Psoas muscle (tissue), 8 donors: ENCODE measurements at regions of chr4 and their contacts with region 1.

Region 1: GRCh38 chr4:22515145-22515887 is 550 bp downstream of the ADGRA3 start:
- DNase-seq: peak; percentile 65 to 78
- ATAC-seq: peak; percentile 61 to 73 (median 66)
- H3K4me3 ChIP-seq: peak overlapping the region; percentile 83
- H3K27ac ChIP-seq: peak overlapping the region; percentile 96
- H3K4me1 ChIP-seq: peaks cover 40% of the 10 kb centered on the region
- H3K27me3 ChIP-seq: no peaks in the 10 kb centered on the region
- CTCF ChIP-seq: peak; percentile 3

Region 2: GRCh38 chr4:22458098-22458497 is 57.2 kb before region 1 on chr4:
- intact Hi-C with region 1: loop called (anchors 5 kb)
- DNase-seq: peak; percentile 19 to 70
- ATAC-seq: peak; percentile 98
- H3K4me3 ChIP-seq: no peak overlapping the region
- H3K27ac ChIP-seq: peak overlapping the region; percentile 86
- H3K4me1 ChIP-seq: peaks cover 37% of the 10 kb centered on the region
- H3K27me3 ChIP-seq: no peaks in the 10 kb centered on the region
- CTCF ChIP-seq: no peak

Region 3: DNA sequence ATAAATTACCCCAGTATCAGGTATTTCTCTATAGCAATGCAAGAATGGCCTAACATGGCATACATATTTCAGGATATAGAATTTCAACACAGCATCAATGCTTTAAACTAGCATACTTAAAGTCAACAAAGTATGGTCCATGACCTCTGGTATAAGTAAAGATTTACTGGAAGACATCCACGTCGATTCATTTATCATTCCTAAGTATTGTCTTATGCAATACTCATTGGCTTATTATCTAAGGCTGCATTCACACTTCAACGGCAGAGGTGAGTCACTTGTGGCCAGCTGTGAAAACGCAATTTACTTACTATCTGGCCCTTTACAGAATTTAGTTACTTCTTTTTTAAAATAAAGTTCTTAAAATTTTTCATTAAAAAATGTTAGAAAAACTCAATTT is 42.0 kb before region 1 on chr4:
- intact Hi-C with region 1: loop called in 1 of 2 experiments (anchors 5 kb)
- DNase-seq: no peak
- ATAC-seq: peak in 2 of 4 donors; percentile 18 to 26
- H3K4me3 ChIP-seq: no peak overlapping the region
- H3K27ac ChIP-seq: peak overlapping the region; percentile 81
- H3K4me1 ChIP-seq: peaks cover 46% of the 10 kb centered on the region
- H3K27me3 ChIP-seq: no peaks in the 10 kb centered on the region
- CTCF ChIP-seq: no peak

Region 4: GRCh38 chr4:22483551-22483981 is 31.8 kb before region 1 on chr4:
- intact Hi-C with region 1: no loop called
- DNase-seq: no peak
- ATAC-seq: no peak
- H3K4me3 ChIP-seq: no peak overlapping the region
- H3K27ac ChIP-seq: no peak overlapping the region
- H3K4me1 ChIP-seq: peaks cover 53% of the 10 kb centered on the region
- H3K27me3 ChIP-seq: no peaks in the 10 kb centered on the region
- CTCF ChIP-seq: no peak

Region 5: GRCh38 chr4:22595684-22596083 is 80.4 kb after region 1 on chr4:
- intact Hi-C with region 1: no loop called
- DNase-seq: no peak
- ATAC-seq: peak; percentile 67 to 92 (median 92)
- H3K4me3 ChIP-seq: peak overlapping the region; percentile 11
- H3K27ac ChIP-seq: peak overlapping the region; percentile 60
- H3K4me1 ChIP-seq: no peaks in the 10 kb centered on the region
- H3K27me3 ChIP-seq: no peaks in the 10 kb centered on the region
- CTCF ChIP-seq: no peak

Region 6: DNA sequence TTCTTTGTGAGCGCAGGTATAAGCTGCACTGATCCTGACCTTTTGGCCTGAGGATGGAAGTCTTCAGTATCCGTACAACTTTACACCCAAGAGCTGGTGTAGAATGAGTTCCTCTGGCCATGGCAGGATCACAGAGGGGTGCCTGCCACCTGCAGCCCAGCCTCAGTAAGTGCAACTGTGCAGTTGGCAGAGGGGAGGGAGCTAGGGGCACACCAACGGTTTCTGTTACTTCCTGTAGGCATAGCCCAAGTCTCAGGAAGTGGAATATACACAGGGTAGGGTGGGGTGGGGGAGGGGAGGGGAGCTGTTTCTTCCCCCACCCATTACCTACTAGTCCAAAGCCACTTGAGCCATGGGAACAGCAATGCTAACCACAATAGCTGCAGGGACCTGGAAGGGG is 92.1 kb after region 1 on chr4:
- intact Hi-C with region 1: loop called in 1 of 2 experiments (anchors 5 kb)
- DNase-seq: peak; percentile 29 to 67
- ATAC-seq: peak; percentile 95 to 100 (median 97)
- H3K4me3 ChIP-seq: no peak overlapping the region
- H3K27ac ChIP-seq: no peak overlapping the region
- H3K4me1 ChIP-seq: no peaks in the 10 kb centered on the region
- H3K27me3 ChIP-seq: no peaks in the 10 kb centered on the region
- CTCF ChIP-seq: peak; percentile 65